ENCODE measurements at regions of chr17 and their contacts with region 1.

Region 1: GRCh38 chr17:9079483-9080103 is 58.3 kb downstream of the NTN1 start:
- DNase-seq: no peak

Region 2: GRCh38 chr17:8489841-8490240 is 589.8 kb before region 1 on chr17:
- intact Hi-C with region 1: no loop called
- DNase-seq: no peak

Region 3: DNA sequence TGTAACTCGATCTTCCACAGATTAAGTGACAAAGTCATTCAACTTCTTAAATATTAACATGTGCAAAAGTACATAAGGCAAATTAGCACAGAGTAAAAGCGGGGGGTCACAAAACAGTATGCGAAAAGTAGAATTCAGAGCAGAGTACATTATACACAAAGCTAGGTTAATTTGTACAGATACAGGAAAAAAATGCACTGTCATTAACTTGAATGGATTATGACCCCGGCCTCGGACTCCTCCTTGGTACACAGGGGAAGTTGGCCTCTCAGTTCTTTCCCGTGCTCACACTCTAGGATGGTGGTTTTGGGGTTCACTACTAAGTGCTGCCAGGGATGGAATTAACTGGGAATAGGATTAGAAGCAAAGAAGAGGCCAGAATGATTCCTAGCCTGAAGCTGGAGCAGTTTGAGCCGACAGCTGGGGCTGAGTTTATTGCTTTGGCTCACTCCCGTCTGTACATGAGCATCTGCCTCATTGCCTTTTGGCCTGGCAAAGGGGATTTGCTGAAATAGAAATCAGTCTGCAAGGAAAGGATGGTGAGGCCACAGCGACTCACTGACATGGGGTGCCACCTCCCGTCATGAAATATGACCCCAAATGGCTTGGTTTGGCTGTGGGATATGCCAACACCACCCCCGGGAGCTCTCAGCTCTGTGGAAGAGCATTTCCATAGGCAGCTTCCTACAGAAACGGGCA is 34.7 kb before region 1 on chr17:
- intact Hi-C with region 1: no loop called
- DNase-seq: peak; percentile 20

Region 4: DNA sequence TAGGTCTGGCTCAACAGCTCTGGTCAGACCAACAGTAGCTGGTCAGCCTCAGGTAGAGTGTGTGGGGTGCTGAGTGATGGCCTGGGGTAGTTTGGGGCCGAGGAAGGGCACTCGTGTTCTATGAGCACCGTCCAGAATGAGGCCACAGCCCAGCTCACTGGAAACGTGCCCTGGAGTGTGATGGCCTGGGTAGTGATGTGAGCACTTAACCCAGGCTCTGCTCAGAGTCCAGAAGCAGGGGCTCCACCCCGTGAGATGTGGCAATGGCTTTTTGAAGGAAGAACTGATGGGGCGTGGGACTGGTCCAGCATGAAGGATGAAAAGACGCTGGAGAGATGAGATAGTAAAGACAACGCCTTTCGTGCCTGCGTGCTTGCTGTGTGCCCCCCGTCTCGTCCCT is 23.0 kb before region 1 on chr17:
- intact Hi-C with region 1: loop called in 1 of 2 experiments (anchors 1 kb)
- DNase-seq: peak; percentile 81